ENCODE measurements at regions of chr10 and their contacts with region 1.

Region 1: GRCh38 chr10:63166742-63167258 is 33.7 kb downstream of the NRBF2 start:
- DNase-seq: peak; percentile 65
- H3K4me3 ChIP-seq: no peak overlapping the region
- H3K27ac ChIP-seq: no peak overlapping the region
- H3K27me3 ChIP-seq: no peaks in the 10 kb centered on the region
- CTCF ChIP-seq: peak; percentile 92

Region 2: DNA sequence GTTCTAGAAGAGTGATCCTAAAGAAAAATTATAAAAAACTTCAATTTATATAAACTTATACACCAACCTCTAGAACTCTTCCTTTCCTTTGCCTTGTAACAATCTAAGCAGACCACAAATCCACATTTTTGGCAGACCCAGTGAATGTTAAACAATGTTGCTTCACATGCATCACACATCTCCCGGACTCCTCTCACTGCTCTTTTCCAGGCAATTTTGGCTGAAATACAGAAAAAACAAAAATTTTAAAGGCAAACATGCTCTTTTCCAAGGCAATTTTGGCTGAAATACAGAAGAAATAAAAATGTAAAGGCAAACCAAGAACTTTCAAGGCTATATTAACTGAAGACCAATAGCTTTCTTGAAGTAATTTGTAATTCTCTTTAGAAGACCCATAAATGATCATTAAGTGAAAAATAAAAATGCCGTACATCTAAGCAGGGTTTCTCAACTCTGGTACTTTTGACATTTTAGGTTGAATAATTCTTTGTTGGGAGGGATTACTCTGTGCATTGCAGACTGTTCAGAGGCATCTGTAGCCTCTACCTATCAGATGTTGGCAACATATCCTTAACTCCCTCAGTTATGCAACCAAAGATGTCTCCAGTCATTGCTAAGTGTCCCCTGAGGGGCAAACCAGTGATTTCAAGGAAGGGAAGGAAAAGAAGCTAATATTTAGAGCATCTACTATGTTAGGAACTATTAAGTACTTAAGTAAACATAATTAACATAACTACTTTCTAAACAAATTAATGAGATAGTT is 30.7 kb after region 1 on chr10:
- CTCF ChIA-PET with region 1: interaction called, 19 read pairs
- POLR2A ChIA-PET with region 1: no interaction called
- DNase-seq: peak; percentile 80
- H3K4me3 ChIP-seq: no peak overlapping the region
- H3K27ac ChIP-seq: no peak overlapping the region
- H3K27me3 ChIP-seq: no peaks in the 10 kb centered on the region
- CTCF ChIP-seq: no peak

Region 3: GRCh38 chr10:63611078-63611477 is 444.3 kb after region 1 on chr10:
- CTCF ChIA-PET with region 1: interaction called, 13 read pairs
- POLR2A ChIA-PET with region 1: no interaction called
- DNase-seq: no peak
- H3K4me3 ChIP-seq: no peak overlapping the region
- H3K27ac ChIP-seq: no peak overlapping the region
- H3K27me3 ChIP-seq: no peaks in the 10 kb centered on the region
- CTCF ChIP-seq: no peak

Region 4: DNA sequence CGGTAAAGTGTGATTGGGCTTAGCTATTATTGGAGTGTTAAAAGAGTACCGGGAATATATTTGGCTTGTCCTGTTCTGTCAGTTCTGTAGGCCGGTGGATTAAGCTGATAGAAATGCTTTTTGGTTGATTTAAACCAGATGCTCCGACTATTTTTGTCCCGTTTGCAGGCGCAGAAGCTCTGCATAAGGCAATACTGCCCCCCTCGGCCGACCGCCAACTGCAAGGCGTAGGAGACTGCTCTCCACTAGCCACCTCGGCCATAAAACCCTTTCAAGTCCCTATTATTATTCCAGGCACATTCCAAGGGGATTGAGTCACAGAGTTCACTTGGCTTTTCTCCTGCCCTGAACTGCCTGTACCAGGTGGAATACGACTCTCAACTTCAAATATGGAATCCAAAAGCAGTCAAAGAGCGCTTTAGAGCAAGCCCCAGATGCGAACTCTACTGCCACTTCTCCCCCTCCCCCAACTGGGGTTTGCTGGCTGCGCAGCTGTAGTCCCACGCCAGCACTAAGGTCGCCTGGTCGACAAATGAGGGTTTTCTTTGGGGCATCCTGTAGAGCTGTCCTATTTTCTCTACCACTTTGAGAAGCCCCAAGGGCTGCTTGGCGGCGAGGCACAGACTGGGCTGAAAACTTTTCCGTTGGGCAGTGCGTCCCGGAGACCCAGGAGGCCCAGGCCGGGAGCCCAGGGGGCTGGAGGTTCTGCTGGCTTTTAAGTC is 462.7 kb after region 1 on chr10:
- CTCF ChIA-PET with region 1: interaction called, 171 read pairs
- POLR2A ChIA-PET with region 1: interaction called, 5 read pairs
- DNase-seq: peak; percentile 95
- H3K4me3 ChIP-seq: peak overlapping the region; percentile 79
- H3K27ac ChIP-seq: peak overlapping the region; percentile 99
- H3K27me3 ChIP-seq: no peaks in the 10 kb centered on the region
- CTCF ChIP-seq: peak; percentile 89

Region 5: GRCh38 chr10:63767138-63767801 is 600.5 kb after region 1 on chr10:
- CTCF ChIA-PET with region 1: interaction called, 62 read pairs
- POLR2A ChIA-PET with region 1: no interaction called
- DNase-seq: no peak
- H3K4me3 ChIP-seq: no peak overlapping the region
- H3K27ac ChIP-seq: no peak overlapping the region
- H3K27me3 ChIP-seq: no peaks in the 10 kb centered on the region
- CTCF ChIP-seq: peak; percentile 54